CD4-positive, alpha-beta memory T cell (primary cell): ENCODE measurements at regions of chr1 and their contacts with region 1.

Region 1: DNA sequence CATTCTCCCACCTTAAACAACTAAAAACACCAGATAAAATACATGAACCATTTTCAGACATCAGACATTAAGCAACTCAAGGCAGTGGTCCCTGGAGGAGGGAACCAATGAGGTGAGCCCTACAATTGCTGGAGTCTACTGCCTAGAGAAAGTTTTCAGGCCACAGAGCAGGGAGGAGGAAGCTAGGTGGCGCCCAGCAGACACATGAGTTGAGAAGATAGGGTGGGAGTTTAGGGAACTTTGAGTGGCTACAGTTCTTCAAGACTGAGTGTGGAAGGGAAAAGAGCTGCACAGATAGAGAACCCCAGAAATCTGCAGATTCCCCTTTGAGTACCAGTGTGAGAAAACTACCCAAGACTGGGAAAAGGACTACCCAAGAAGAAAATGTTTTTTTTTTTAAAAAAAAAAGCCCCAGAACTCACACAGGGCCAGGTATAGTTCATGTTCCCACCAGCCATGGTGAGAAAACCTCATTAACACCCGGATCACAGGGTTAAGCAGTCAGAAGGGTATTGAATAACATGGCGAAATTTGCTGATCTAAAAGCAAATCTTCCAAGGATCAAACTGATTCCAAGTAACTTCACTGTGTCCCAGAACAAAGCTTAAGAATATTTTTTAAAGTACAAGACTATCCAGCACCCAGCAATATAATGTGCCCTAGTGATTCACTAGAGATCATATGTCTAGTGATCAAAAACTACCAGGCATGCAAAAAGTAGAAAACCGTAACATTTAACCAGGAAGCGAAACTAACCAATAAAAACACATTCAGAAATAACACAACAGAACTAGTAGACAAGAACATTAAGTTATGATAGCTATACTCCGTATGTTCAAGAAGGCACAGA is 12.0 kb downstream of the ALDH9A1 start:
- DNase-seq: no peak
- H3K4me3 ChIP-seq: no peak overlapping the region
- H3K4me3 Mint-ChIP-seq: peak overlapping the region in 6 of 8 donors; percentile 40 to 76 (median 64)
- H3K27ac ChIP-seq: no peak overlapping the region
- H3K27ac Mint-ChIP-seq: peak overlapping the region; percentile 17 to 84 (median 72)
- H3K4me1 ChIP-seq: peaks cover 23% of the 10 kb centered on the region
- H3K4me1 Mint-ChIP-seq: peaks cover 28 to 64% (median 47%) of the 10 kb centered on the region in 4 donors
- H3K27me3 ChIP-seq: no peaks in the 10 kb centered on the region
- H3K27me3 Mint-ChIP-seq: no peaks in the 10 kb centered on the region

Region 2: GRCh38 chr1:165697881-165698760 is 11.8 kb after region 1 on chr1 and contains the start of gene ALDH9A1:
- CTCF ChIA-PET with region 1: interaction called, 13 read pairs
- POLR2A ChIA-PET with region 1: interaction called, 18 read pairs
- intact Hi-C with region 1: no loop called
- DNase-seq: peak; percentile 86 to 91 (median 87)
- H3K4me3 ChIP-seq: peak within 1 kb of the TSS; percentile 95 to 97
- H3K4me3 Mint-ChIP-seq: peak within 1 kb of the TSS; percentile 92 to 100 (median 98)
- H3K27ac ChIP-seq: peak within 1 kb of the TSS; percentile 79
- H3K27ac Mint-ChIP-seq: peak within 1 kb of the TSS; percentile 91 to 99 (median 97)
- H3K4me1 ChIP-seq: peaks cover 21% of the 10 kb centered on the region
- H3K4me1 Mint-ChIP-seq: peaks cover 15 to 39% (median 27%) of the 10 kb centered on the region in 4 donors
- H3K27me3 ChIP-seq: no peaks in the 10 kb centered on the region
- H3K27me3 Mint-ChIP-seq: no peaks in the 10 kb centered on the region
- total RNA-seq, gene ALDH9A1: 45.2 to 47.1 TPM